CD8-positive, alpha-beta T cell (primary cell): ENCODE measurements at regions of chr4 and their contacts with region 1.

Region 1: GRCh38 chr4:54683616-54684346 is 26.0 kb downstream of the KIT start:
- DNase-seq: peak in 7 of 9 experiments; percentile 24 to 64 (median 49)
- ATAC-seq: peak; percentile 65
- H3K4me3 ChIP-seq: no peak overlapping the region
- H3K4me3 Mint-ChIP-seq: peak overlapping the region; percentile 61
- H3K27ac ChIP-seq: no peak overlapping the region
- H3K27ac Mint-ChIP-seq: peak overlapping the region; percentile 85
- H3K4me1 ChIP-seq: peaks cover 14% of the 10 kb centered on the region
- H3K4me1 Mint-ChIP-seq: peaks cover 35% of the 10 kb centered on the region
- H3K27me3 ChIP-seq: no peaks in the 10 kb centered on the region
- H3K27me3 Mint-ChIP-seq: no peaks in the 10 kb centered on the region
- CTCF ChIP-seq: peak; percentile 47

Region 2: DNA sequence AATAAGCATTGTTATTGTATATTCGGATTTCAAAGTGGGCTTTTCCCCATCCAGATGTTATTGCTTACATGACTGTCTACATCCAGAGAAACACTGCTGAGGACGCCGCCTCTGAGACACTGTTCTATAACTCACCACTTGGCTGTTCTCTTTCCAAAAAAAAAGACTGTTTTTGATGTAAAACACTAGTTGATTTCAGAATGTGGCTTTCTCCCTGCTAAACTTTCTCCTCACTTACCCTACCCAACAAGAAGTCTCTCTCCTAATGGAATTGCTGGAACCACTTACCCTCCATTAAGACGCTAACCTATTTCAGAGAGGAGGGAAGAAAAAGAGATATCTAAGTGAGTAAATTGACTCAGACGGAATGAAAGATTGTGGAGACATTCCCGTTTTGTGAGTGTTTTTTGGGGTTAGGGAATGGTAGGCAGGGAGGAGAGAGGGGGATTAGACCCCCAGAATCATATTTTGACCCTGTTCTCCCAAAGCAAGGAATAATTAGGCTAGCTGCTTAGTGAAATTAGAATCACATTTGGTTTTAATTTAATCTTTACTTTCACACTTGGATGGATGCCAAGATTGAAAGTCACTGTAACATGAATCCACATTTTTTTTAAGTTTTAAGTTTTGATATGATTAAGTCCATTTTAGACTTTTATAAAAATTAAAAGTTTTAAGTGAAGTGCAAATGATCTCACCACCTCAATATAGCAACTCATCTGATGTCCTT is 794.3 kb before region 1 on chr4:
- CTCF ChIA-PET with region 1: no interaction called
- POLR2A ChIA-PET with region 1: no interaction called
- intact Hi-C with region 1: no loop called
- DNase-seq: no peak
- ATAC-seq: no peak
- H3K4me3 ChIP-seq: no peak overlapping the region
- H3K4me3 Mint-ChIP-seq: no peak overlapping the region
- H3K27ac ChIP-seq: no peak overlapping the region
- H3K27ac Mint-ChIP-seq: no peak overlapping the region
- H3K4me1 ChIP-seq: no peaks in the 10 kb centered on the region
- H3K4me1 Mint-ChIP-seq: no peaks in the 10 kb centered on the region
- H3K27me3 ChIP-seq: no peaks in the 10 kb centered on the region
- H3K27me3 Mint-ChIP-seq: peaks cover 9% of the 10 kb centered on the region
- CTCF ChIP-seq: no peak

Region 3: DNA sequence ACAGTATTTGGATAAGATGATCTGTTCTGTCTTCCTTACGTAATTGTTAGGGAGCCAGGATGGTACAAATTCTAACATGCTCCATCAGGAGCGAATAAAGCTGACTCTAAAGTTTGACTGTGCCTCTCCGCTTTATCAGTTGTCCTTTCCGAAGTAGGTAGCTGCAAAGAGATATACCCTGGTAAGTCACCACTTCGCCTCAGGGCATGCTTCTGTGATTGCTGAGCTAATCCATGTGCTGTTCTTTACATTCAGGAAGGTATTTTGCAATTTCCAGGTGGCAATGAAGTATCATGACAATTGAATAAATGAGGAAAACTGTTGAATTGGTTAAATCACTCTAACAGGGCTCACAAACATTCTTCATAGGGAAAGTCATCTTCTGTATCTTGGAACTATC is 12.9 kb after region 1 on chr4:
- CTCF ChIA-PET with region 1: interaction called, 11 read pairs
- POLR2A ChIA-PET with region 1: no interaction called
- intact Hi-C with region 1: no loop called
- DNase-seq: no peak
- ATAC-seq: no peak
- H3K4me3 ChIP-seq: no peak overlapping the region
- H3K4me3 Mint-ChIP-seq: no peak overlapping the region
- H3K27ac ChIP-seq: no peak overlapping the region
- H3K27ac Mint-ChIP-seq: no peak overlapping the region
- H3K4me1 ChIP-seq: no peaks in the 10 kb centered on the region
- H3K4me1 Mint-ChIP-seq: no peaks in the 10 kb centered on the region
- H3K27me3 ChIP-seq: no peaks in the 10 kb centered on the region
- H3K27me3 Mint-ChIP-seq: no peaks in the 10 kb centered on the region
- CTCF ChIP-seq: no peak

Region 4: GRCh38 chr4:54837576-54838140 is 153.9 kb after region 1 on chr4:
- CTCF ChIA-PET with region 1: interaction called, 3 read pairs
- POLR2A ChIA-PET with region 1: no interaction called
- intact Hi-C with region 1: loop called in 1 of 2 experiments (anchors 10 kb)
- DNase-seq: no peak
- ATAC-seq: no peak
- H3K4me3 ChIP-seq: no peak overlapping the region
- H3K4me3 Mint-ChIP-seq: no peak overlapping the region
- H3K27ac ChIP-seq: no peak overlapping the region
- H3K27ac Mint-ChIP-seq: no peak overlapping the region
- H3K4me1 ChIP-seq: no peaks in the 10 kb centered on the region
- H3K4me1 Mint-ChIP-seq: no peaks in the 10 kb centered on the region
- H3K27me3 ChIP-seq: no peaks in the 10 kb centered on the region
- H3K27me3 Mint-ChIP-seq: no peaks in the 10 kb centered on the region
- CTCF ChIP-seq: no peak

Region 5: DNA sequence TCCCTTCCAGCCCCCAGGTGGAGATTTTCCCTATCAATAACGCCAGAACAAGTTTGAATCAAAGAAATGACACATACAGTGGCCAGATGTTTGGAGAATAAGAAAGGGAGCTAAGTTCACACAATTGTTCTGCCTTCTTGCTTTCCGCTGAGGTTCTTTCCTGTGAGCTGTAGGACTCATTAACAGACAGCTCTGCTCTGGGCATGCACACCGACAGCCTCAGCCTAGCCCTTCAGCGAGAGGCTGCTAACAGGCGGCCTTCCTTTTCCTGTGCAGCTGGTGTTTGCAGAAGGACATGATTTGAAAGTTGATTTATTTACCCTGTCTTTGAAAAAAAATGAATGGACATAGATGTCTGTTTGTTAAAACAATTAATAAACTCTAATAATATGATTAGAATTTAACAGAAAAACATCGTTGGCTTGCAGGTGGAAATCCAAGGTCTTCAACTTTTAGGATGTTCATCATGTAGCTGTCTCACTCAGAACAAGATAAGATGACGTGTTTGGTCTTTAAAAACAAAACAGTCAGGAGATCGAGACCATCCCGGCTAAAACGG is 258.3 kb after region 1 on chr4:
- CTCF ChIA-PET with region 1: interaction called, 7 read pairs
- POLR2A ChIA-PET with region 1: no interaction called
- intact Hi-C with region 1: loop called (anchors 1 to 5 kb)
- DNase-seq: peak; percentile 18 to 78 (median 34)
- ATAC-seq: peak; percentile 79
- H3K4me3 ChIP-seq: peak overlapping the region in 1 of 2 experiments; percentile 12
- H3K4me3 Mint-ChIP-seq: peak overlapping the region; percentile 71
- H3K27ac ChIP-seq: peak overlapping the region; percentile 59 to 72
- H3K27ac Mint-ChIP-seq: peak overlapping the region; percentile 98
- H3K4me1 ChIP-seq: peaks cover 40% of the 10 kb centered on the region
- H3K4me1 Mint-ChIP-seq: peaks cover 56% of the 10 kb centered on the region
- H3K27me3 ChIP-seq: no peaks in the 10 kb centered on the region
- H3K27me3 Mint-ChIP-seq: no peaks in the 10 kb centered on the region
- CTCF ChIP-seq: no peak